Posterior cingulate gyrus (tissue), 11 donors: ENCODE measurements at regions of chr3 and their contacts with region 1.

Region 1: GRCh38 chr3:33717866-33718594 is at the start of gene CLASP2:
- DNase-seq: peak; percentile 67 to 97 (median 80)

Region 2: GRCh38 chr3:33440323-33441232 is 277.5 kb before region 1 on chr3 and contains the start of gene UBP1:
- intact Hi-C with region 1: loop called (anchors 10 kb)
- DNase-seq: peak; percentile 97 to 100 (median 99)

Region 3: GRCh38 chr3:33636125-33636850 is 81.7 kb before region 1 on chr3:
- intact Hi-C with region 1: loop called (anchors 1 kb)
- DNase-seq: no peak

Region 4: GRCh38 chr3:33658991-33659848 is 58.8 kb before region 1 on chr3:
- intact Hi-C with region 1: loop called (anchors 5 kb)
- DNase-seq: peak; percentile 85 to 99 (median 90)

Region 5: DNA sequence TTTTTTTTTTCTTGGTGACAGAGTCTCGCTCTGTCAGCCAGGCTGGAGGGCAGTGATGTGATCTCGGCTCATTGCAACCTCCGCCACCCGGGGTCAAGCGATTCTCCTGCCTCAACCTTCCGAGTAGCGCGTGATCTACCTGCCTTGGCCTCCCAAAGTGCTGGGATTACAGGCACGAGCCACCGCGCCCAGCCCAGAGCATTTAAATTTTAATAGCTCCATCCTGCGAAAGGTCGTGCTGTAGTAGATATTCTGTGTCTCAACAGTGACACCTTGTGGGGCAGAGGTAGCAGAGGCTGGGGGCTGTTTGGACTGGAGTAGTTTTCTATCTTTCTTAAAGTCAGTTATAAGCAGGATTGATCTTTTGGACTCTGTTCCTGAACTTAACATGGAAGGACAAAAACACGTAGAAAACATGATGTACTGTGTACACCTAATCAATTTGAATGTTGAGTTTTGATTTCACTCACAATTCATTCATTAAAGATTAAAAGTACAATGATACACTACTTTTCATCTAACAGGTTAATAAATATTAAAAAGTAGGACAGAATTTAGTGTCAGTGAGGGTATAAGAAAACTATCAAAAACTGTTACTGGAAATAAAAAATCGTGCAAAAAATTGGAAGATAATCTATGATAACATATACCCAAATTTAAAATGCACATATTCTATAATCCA is 69.4 kb after region 1 on chr3:
- intact Hi-C with region 1: loop called (anchors 5 kb)
- DNase-seq: peak in 9 of 10 donors; percentile 16 to 90 (median 57)

Region 6: DNA sequence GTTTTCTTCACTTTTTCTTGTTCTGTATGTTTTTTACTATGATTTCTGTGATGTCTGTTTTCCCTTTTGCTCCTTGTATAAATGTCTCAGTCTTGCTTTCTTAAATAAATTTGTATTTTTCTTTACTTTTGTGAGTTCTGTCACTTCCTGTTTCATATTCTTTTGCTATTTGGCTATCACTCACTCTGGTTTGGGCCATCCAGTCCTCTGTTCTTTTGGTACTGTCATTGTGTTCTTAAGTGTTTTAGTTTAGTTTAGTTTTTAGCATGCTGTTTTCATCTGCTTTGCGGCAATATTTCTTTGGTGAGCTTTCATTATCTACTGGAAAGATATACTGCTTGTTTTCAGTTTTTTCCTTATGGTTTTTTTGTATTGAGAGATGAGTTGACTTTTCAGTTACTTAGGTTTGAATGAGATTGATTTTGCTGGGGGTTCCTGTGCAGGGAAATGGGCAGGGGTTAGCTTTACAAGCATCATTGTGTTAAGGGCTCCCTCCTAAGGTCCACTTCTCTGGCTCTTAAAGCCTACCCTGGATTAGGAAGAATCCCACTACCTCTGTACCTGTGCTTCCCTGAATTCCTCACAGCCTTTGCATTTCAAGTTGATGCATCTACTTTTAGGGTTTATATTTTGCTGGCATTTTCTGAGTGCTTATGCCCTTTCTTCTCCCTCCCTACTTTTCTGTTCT is 115.5 kb after region 1 on chr3:
- intact Hi-C with region 1: no loop called
- DNase-seq: no peak